ENCODE measurements at regions of chr10 and their contacts with region 1.

Region 1: DNA sequence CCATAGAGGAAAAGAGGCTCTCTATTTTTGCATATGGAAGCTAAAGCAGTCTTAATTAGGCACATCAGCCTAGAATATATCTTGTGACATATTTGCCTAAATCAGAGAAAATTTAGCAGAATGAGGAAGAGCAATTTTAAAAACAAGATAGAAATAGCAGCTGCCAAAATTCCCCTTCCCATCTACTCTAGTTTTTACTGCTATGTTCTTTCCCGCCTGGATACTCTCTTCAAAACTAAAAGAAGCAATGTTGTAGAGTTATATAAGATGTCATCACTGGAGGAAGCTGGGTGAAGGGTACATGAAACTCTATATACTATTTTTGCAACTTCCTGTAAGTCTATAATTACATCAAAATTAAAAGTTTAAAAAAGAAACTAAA is 87.0 kb downstream of the ARMH3 start:
- DNase-seq: no peak
- ATAC-seq: no peak
- H3K4me3 ChIP-seq: no peak overlapping the region
- H3K27ac ChIP-seq: no peak overlapping the region
- H3K4me1 ChIP-seq: peaks cover 6% of the 10 kb centered on the region
- H3K27me3 ChIP-seq: no peaks in the 10 kb centered on the region
- CTCF ChIP-seq: no peak
- POLR2A ChIP-seq: no peak
- RAD21 ChIP-seq: no peak

Region 2: DNA sequence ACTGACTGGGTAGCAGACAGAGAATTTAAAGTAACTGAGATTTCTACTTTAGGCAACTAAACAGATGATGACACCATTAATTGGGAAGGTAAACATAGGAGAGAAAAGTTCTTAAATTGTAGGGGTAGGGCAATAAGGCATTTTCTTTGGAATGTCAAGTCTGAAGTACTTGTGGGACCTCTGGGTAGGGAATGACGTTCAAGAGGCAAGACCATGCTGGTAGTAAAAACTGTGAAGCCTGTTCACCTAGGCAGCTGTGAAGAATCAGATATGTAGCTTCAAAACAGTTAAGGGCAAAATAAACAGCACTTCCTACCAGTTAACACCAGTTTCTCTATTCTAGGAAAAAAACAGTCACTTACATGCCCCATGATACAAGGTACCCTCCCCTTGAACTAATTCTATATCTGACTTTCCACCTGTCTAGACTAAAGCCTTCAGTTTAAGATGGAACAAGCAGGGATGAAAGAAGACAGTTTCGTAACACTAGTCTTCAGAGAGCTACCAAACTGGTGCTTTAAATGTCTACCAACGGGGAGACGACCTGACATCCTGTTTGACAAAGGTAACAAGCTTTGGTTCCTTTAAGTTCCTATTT is 62.2 kb before region 1 on chr10:
- CTCF ChIA-PET with region 1: no interaction called
- POLR2A ChIA-PET with region 1: no interaction called
- dilution Hi-C with region 1: no loop called
- in situ Hi-C with region 1: no loop called
- intact Hi-C with region 1: loop called (anchors 5 kb)
- DNase-seq: no peak
- ATAC-seq: no peak
- H3K4me3 ChIP-seq: no peak overlapping the region
- H3K27ac ChIP-seq: no peak overlapping the region
- H3K4me1 ChIP-seq: no peaks in the 10 kb centered on the region
- H3K27me3 ChIP-seq: no peaks in the 10 kb centered on the region
- CTCF ChIP-seq: no peak
- POLR2A ChIP-seq: no peak
- RAD21 ChIP-seq: no peak

Region 3: GRCh38 chr10:101920546-101920945 is 48.4 kb before region 1 on chr10:
- CTCF ChIA-PET with region 1: no interaction called
- POLR2A ChIA-PET with region 1: no interaction called
- dilution Hi-C with region 1: no loop called
- in situ Hi-C with region 1: no loop called
- intact Hi-C with region 1: loop called (anchors 5 kb)
- DNase-seq: no peak
- ATAC-seq: no peak
- H3K4me3 ChIP-seq: no peak overlapping the region
- H3K27ac ChIP-seq: no peak overlapping the region
- H3K4me1 ChIP-seq: no peaks in the 10 kb centered on the region
- H3K27me3 ChIP-seq: no peaks in the 10 kb centered on the region
- CTCF ChIP-seq: no peak
- POLR2A ChIP-seq: no peak
- RAD21 ChIP-seq: no peak

Region 4: GRCh38 chr10:103254538-103255325 is 1285.8 kb after region 1 on chr10:
- CTCF ChIA-PET with region 1: no interaction called
- POLR2A ChIA-PET with region 1: no interaction called
- dilution Hi-C with region 1: no loop called
- in situ Hi-C with region 1: no loop called
- intact Hi-C with region 1: no loop called
- DNase-seq: peak; percentile 40
- ATAC-seq: no peak
- H3K4me3 ChIP-seq: no peak overlapping the region
- H3K27ac ChIP-seq: no peak overlapping the region
- H3K4me1 ChIP-seq: no peaks in the 10 kb centered on the region
- H3K27me3 ChIP-seq: no peaks in the 10 kb centered on the region
- CTCF ChIP-seq: no peak
- POLR2A ChIP-seq: no peak
- RAD21 ChIP-seq: no peak

Measured in IMR-90 (cell line).